ENCODE measurements at regions of chr1 and their contacts with region 1.

Region 1: GRCh38 chr1:51768971-51769588 is 109.4 kb downstream of the NRDC start:
- DNase-seq: peak in 17 of 35 experiments; percentile 4 to 64 (median 10)
- ATAC-seq: peak; percentile 45 to 54 (median 51)
- H3K4me3 ChIP-seq: no peak overlapping the region
- H3K4me3 Mint-ChIP-seq: no peak overlapping the region
- H3K27ac ChIP-seq: no peak overlapping the region
- H3K27ac Mint-ChIP-seq: no peak overlapping the region
- H3K4me1 ChIP-seq: no peaks in the 10 kb centered on the region
- H3K4me1 Mint-ChIP-seq: peaks cover 8 to 9% (median 9%) of the 10 kb centered on the region in 3 donors
- H3K27me3 ChIP-seq: no peaks in the 10 kb centered on the region
- H3K27me3 Mint-ChIP-seq: no peaks in the 10 kb centered on the region

Region 2: DNA sequence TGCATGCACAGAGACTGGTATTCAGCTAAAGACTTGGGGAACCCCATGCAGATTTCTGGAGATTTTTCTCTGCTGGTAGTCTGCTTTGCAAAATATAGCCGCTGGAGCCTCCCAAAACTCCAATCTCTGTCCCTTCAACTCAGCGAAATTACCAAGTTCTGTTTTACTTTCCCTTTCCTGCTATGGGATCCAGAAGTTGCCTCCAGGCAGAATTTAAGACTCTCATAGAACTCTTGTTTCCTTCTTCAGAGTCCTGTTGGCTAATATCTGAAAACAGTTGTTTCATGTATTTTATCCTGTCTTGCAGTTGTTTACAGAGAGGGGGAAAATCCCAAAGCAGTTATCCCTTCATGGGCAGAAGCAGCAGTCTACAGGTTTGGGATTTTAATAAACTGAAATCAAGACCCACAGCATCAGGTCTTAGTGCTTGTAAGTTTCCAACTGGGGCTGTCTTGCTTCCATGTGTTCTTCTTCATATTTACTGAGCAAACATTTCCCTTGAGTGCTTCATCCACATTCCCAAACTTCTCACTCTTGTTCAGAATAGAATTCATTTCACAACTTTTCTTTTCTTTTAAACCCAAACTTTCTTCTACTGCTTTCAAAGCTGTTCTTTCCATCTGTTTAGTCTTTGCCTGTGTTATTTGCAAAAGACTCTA is 1124.5 kb before region 1 on chr1:
- CTCF ChIA-PET with region 1: no interaction called
- POLR2A ChIA-PET with region 1: interaction called in 1 of 2 experiments, 10 read pairs
- DNase-seq: no peak
- ATAC-seq: no peak
- H3K4me3 ChIP-seq: no peak overlapping the region
- H3K4me3 Mint-ChIP-seq: no peak overlapping the region
- H3K27ac ChIP-seq: no peak overlapping the region
- H3K27ac Mint-ChIP-seq: no peak overlapping the region
- H3K4me1 ChIP-seq: no peaks in the 10 kb centered on the region
- H3K4me1 Mint-ChIP-seq: no peaks in the 10 kb centered on the region
- H3K27me3 ChIP-seq: no peaks in the 10 kb centered on the region
- H3K27me3 Mint-ChIP-seq: no peaks in the 10 kb centered on the region

Region 3: DNA sequence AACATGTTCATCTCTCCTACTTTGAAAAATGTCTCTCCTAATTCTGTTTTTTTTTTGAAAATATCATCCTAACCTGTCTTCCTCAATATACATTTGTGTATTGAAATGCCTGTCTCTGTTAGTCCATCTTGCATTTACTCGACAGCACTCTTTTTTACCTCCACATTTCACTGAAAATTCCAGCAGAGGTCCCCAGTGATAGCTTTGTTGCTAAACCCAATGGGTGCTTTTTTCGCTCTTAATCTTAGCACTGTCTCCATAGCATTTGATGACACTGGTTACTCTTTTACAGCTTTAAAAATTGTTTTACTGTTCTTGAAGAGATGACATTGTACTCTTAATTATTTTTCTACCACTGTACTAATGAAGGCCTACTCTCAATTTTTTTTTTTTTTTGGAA is 141.4 kb before region 1 on chr1:
- CTCF ChIA-PET with region 1: interaction called, 6 to 10 read pairs
- POLR2A ChIA-PET with region 1: no interaction called
- DNase-seq: peak in 1 of 35 experiments; percentile 25
- ATAC-seq: no peak
- H3K4me3 ChIP-seq: no peak overlapping the region
- H3K4me3 Mint-ChIP-seq: no peak overlapping the region
- H3K27ac ChIP-seq: no peak overlapping the region
- H3K27ac Mint-ChIP-seq: no peak overlapping the region
- H3K4me1 ChIP-seq: peaks cover 0 to 2% of the 10 kb centered on the region in 2 experiments
- H3K4me1 Mint-ChIP-seq: peaks cover 40 to 50% (median 44%) of the 10 kb centered on the region in 3 donors
- H3K27me3 ChIP-seq: no peaks in the 10 kb centered on the region
- H3K27me3 Mint-ChIP-seq: no peaks in the 10 kb centered on the region

Region 4: DNA sequence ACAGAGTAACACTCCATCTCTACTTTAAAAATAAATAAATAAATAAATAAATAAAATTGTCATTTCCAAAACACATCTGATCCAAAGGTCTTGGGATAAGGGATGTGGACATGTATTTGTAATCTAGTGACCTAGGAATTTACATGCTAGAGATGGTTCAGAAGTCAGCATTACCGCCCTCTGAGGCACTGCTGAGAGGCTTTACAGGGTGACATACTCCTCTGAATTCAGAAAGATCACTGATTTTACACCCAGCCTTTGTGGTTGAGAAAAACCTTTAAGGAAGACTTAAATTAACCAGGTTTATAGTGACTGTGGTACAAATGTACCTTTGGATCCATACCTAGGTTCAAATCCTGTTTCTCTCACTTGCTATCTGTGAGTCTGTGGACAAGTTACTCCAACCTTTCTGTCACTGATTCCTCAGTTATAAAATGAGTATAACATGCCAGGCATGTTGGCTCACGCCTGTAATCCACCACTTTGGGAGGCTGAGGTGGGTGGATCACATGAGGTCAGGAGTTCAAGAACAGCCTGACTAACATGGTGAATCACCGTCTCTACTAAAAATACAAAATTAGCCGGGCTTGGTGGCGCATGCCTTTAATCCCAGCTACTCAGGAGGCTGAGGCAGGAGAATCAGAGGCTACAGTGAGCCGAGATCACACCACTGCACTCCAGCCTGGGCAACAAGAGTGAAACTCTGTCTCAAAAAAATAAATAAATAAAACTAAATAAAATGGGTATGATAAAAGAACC is 132.1 kb before region 1 on chr1:
- CTCF ChIA-PET with region 1: no interaction called
- POLR2A ChIA-PET with region 1: interaction called in 1 of 2 experiments, 10 read pairs
- DNase-seq: no peak
- ATAC-seq: no peak
- H3K4me3 ChIP-seq: no peak overlapping the region
- H3K4me3 Mint-ChIP-seq: no peak overlapping the region
- H3K27ac ChIP-seq: no peak overlapping the region
- H3K27ac Mint-ChIP-seq: no peak overlapping the region
- H3K4me1 ChIP-seq: no peaks in the 10 kb centered on the region
- H3K4me1 Mint-ChIP-seq: peaks cover 13 to 21% (median 21%) of the 10 kb centered on the region in 3 donors
- H3K27me3 ChIP-seq: no peaks in the 10 kb centered on the region
- H3K27me3 Mint-ChIP-seq: no peaks in the 10 kb centered on the region